ENCODE measurements at regions of chr9 and their contacts with region 1.

Region 1: GRCh38 chr9:120892748-120893610 is 16.0 kb upstream of the PHF19 start:
- DNase-seq: peak; percentile 69 to 93 (median 75)
- H3K4me3 ChIP-seq: peak overlapping the region in 1 of 2 donors; percentile 41
- H3K4me3 Mint-ChIP-seq: peak overlapping the region; percentile 8 to 82 (median 68)
- H3K27ac ChIP-seq: peak overlapping the region; percentile 76
- H3K27ac Mint-ChIP-seq: peak overlapping the region; percentile 86 to 100 (median 98)
- H3K4me1 ChIP-seq: peaks cover 95% of the 10 kb centered on the region
- H3K4me1 Mint-ChIP-seq: peaks cover 49 to 92% (median 71%) of the 10 kb centered on the region in 4 donors
- H3K27me3 ChIP-seq: no peaks in the 10 kb centered on the region
- H3K27me3 Mint-ChIP-seq: no peaks in the 10 kb centered on the region

Region 2: DNA sequence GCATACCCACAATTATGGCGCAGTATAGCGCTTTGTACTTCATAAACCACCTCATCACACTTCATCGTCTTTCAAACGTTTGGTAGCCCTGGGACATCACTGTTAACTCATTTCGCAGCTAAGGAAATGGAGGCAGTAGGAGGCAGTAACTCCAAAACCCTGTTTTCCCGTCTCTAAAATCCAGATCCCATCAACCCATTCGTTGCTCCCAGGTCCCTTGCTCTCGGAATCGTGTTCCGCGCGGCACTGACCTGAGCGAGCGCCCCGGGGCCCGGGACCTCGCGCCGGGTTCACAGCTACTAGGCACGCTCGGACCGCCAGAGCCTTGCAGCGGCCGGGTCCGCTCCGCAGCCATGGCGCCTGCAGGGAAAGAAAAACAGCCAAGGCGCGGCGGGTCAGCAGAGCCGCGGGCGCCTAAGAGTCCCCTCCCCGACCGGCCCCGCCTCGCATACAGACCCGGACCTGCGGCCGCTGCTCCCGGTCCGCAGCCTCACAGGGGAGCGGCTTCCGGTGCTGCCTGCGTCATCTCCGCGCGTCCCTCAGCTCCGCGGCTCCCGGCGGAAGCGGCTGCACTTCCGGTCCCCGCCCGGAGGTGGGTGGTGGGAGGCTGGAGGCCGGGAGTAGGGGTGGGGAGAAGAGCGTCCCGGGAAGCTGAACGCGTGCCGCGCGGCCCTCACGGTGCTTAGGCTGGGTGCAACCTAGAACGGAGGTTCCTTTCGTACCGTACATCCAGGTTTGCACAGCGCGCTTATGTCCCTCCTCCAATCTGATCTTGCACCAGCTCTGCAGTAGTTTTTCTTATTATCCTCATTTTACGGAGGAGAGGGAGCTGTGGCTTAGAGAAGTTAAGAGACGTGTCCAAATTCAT is 99.8 kb before region 1 on chr9 and contains the start of gene FBXW2:
- CTCF ChIA-PET with region 1: no interaction called
- POLR2A ChIA-PET with region 1: interaction called, 15 read pairs
- intact Hi-C with region 1: no loop called
- DNase-seq: peak; percentile 74 to 83 (median 78)
- H3K4me3 ChIP-seq: peak within 1 kb of the TSS; percentile 82 to 94
- H3K4me3 Mint-ChIP-seq: peak within 1 kb of the TSS; percentile 89 to 98 (median 92)
- H3K27ac ChIP-seq: peak within 1 kb of the TSS; percentile 77
- H3K27ac Mint-ChIP-seq: peak within 1 kb of the TSS; percentile 90 to 97 (median 93)
- H3K4me1 ChIP-seq: peaks cover 58% of the 10 kb centered on the region
- H3K4me1 Mint-ChIP-seq: peaks cover 39 to 62% (median 50%) of the 10 kb centered on the region in 4 donors
- H3K27me3 ChIP-seq: no peaks in the 10 kb centered on the region
- H3K27me3 Mint-ChIP-seq: no peaks in the 10 kb centered on the region
- total RNA-seq, gene FBXW2: 73.7 to 77.8 TPM

Region 3: GRCh38 chr9:120904061-120904977 is 11.3 kb after region 1 on chr9:
- CTCF ChIA-PET with region 1: interaction called, 47 read pairs
- POLR2A ChIA-PET with region 1: interaction called, 5,577 read pairs
- intact Hi-C with region 1: loop called (anchors 1 kb)
- DNase-seq: peak; percentile 76 to 89 (median 80)
- H3K4me3 ChIP-seq: no peak overlapping the region
- H3K4me3 Mint-ChIP-seq: peak overlapping the region in 7 of 8 donors; percentile 55 to 75 (median 72)
- H3K27ac ChIP-seq: peak overlapping the region; percentile 79
- H3K27ac Mint-ChIP-seq: peak overlapping the region; percentile 93 to 99 (median 98)
- H3K4me1 ChIP-seq: peaks cover 91% of the 10 kb centered on the region
- H3K4me1 Mint-ChIP-seq: peaks cover 55 to 88% (median 71%) of the 10 kb centered on the region in 4 donors
- H3K27me3 ChIP-seq: no peaks in the 10 kb centered on the region
- H3K27me3 Mint-ChIP-seq: no peaks in the 10 kb centered on the region

Region 4: DNA sequence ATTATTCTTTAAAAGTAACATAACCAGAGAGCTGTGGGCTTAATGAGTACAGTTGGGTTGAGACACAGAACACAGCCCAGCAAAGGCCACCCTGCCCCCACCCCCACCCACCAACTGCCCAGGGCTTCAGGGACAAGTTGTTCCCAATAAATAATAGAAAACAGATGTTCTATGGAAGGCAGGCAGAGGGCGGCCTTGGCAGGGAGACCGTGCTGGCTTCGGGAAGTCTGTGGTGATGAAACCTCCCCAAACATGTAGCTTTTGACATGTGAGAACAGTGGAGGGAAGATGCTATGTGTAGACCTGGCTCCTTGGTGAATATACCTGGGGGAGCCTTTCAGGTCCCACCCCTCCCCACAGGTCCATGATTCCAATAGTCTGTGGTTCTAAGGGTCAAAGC is 23.6 kb after region 1 on chr9:
- CTCF ChIA-PET with region 1: interaction called, 11 read pairs
- POLR2A ChIA-PET with region 1: interaction called, 5,577 read pairs
- intact Hi-C with region 1: no loop called
- DNase-seq: no peak
- H3K4me3 ChIP-seq: no peak overlapping the region
- H3K4me3 Mint-ChIP-seq: peak overlapping the region; percentile 2 to 84 (median 69)
- H3K27ac ChIP-seq: peak overlapping the region; percentile 50
- H3K27ac Mint-ChIP-seq: peak overlapping the region; percentile 78 to 96 (median 89)
- H3K4me1 ChIP-seq: peaks cover 92% of the 10 kb centered on the region
- H3K4me1 Mint-ChIP-seq: peaks cover 59 to 98% (median 79%) of the 10 kb centered on the region in 4 donors
- H3K27me3 ChIP-seq: no peaks in the 10 kb centered on the region
- H3K27me3 Mint-ChIP-seq: no peaks in the 10 kb centered on the region

Measured in CD4-positive, alpha-beta memory T cell (primary cell).